ENCODE measurements at regions of chrX and their contacts with region 1.

Region 1: GRCh38 chrX:11836284-11836683 is 78.2 kb downstream of the MSL3 start:
- DNase-seq: no peak
- H3K4me3 Mint-ChIP-seq: no peak overlapping the region
- H3K27ac Mint-ChIP-seq: no peak overlapping the region
- H3K4me1 Mint-ChIP-seq: peaks cover 16% of the 10 kb centered on the region
- H3K27me3 Mint-ChIP-seq: no peaks in the 10 kb centered on the region

Region 2: GRCh38 chrX:11309220-11309619 is 527.1 kb before region 1 on chrX:
- CTCF ChIA-PET with region 1: no interaction called
- intact Hi-C with region 1: no loop called
- DNase-seq: no peak
- H3K4me3 Mint-ChIP-seq: no peak overlapping the region
- H3K27ac Mint-ChIP-seq: no peak overlapping the region
- H3K4me1 Mint-ChIP-seq: no peaks in the 10 kb centered on the region
- H3K27me3 Mint-ChIP-seq: no peaks in the 10 kb centered on the region

Region 3: GRCh38 chrX:11792461-11793421 is 43.5 kb before region 1 on chrX:
- CTCF ChIA-PET with region 1: interaction called, 3 read pairs
- intact Hi-C with region 1: loop called (anchors 2 kb)
- DNase-seq: peak; percentile 84
- H3K4me3 Mint-ChIP-seq: peak overlapping the region; percentile 11
- H3K27ac Mint-ChIP-seq: peak overlapping the region; percentile 85
- H3K4me1 Mint-ChIP-seq: peaks cover 44% of the 10 kb centered on the region
- H3K27me3 Mint-ChIP-seq: no peaks in the 10 kb centered on the region

Region 4: GRCh38 chrX:11867610-11868345 is 31.5 kb after region 1 on chrX:
- CTCF ChIA-PET with region 1: no interaction called
- intact Hi-C with region 1: no loop called
- DNase-seq: no peak
- H3K4me3 Mint-ChIP-seq: no peak overlapping the region
- H3K27ac Mint-ChIP-seq: no peak overlapping the region
- H3K4me1 Mint-ChIP-seq: no peaks in the 10 kb centered on the region
- H3K27me3 Mint-ChIP-seq: no peaks in the 10 kb centered on the region

Measured in activated naive CD4-positive, alpha-beta T cell treated with anti-CD3 and anti-CD28 coated beads for 36 hours (primary cell).